ENCODE measurements at regions of chr12 and their contacts with region 1.

Region 1: DNA sequence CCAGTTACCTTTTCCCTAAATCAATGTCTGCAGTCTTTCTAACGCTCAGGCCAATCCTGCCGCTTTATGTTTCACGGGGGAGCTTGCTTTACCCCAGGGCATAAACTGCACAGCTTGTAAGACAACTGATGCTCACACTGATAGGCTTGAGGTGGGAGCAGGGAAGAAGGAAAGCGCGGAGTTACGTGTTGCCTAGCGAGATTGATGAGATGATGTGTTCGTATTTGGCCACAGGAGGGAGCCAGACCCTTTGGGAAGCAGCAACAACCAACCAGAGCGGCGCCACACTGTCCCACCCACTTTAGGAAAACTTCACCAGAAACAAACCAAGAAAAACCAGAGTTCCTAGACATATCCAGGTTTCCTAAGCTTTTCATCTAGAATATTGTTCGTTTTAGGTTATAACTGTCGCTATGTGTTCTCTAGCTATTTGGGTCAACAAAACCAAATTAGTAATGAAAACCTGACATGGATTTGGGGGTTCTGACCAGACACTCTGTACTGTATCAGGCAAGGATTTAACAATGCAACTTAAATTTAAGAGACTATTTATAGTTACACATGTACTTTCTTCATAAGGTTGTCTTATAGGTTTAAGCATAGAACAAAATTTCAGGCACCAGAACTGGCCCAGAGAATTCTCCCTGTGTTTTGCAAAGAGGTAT is 2.4 kb downstream of the IL26 start:
- DNase-seq: peak; percentile 76 to 87
- ATAC-seq: peak; percentile 99 to 100
- H3K4me3 ChIP-seq: no peak overlapping the region
- H3K27ac ChIP-seq: no peak overlapping the region
- H3K4me1 ChIP-seq: no peaks in the 10 kb centered on the region
- CTCF ChIP-seq: peak; percentile 91
- EP300 ChIP-seq: no peak
- POLR2A ChIP-seq: no peak
- RAD21 ChIP-seq: peak; percentile 92 to 96

Region 2: DNA sequence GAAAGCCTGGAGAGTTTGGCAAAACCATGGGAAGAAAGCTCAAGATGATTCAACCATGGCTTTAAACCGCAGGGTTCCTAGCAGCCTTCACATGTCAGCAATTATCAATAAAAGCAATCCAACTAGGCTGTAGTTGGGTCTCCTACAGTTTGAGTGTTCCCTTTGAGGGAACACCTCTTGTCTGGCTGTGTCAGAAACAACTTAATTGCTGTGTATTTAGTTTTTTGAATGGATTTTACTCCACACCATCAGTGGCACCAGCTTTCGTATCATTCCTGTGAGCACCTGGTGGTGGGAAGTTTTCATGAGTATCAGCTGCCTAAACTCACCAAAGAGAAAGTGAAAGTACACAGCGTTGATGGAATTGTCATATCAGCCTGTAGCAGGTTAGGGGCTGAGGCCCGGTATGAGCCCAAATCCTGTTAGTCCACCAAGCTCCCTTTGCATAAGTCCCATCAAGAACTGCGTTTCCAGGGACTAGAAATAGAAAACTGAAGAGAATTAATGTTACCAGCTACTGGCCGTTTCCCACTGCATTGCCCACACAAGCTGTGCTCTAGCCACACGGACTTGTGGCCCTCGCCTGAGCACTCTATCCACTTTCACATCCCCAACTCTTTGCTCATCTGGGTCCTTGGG is 13.3 kb after region 1 on chr12:
- CTCF ChIA-PET with region 1: interaction called, 34 read pairs
- POLR2A ChIA-PET with region 1: no interaction called
- DNase-seq: peak in 1 of 2 experiments; percentile 28
- ATAC-seq: peak; percentile 45 to 76; a peak in 5 of 6 replicates
- H3K4me3 ChIP-seq: peak overlapping the region; percentile 39
- H3K27ac ChIP-seq: peak overlapping the region; percentile 15 to 58; a peak in 3 of 6 replicates
- H3K4me1 ChIP-seq: peaks cover 15% of the 10 kb centered on the region; the same call in 2 of the 3 replicates
- CTCF ChIP-seq: no peak; the same call in 2 of the 3 replicates
- EP300 ChIP-seq: no peak
- POLR2A ChIP-seq: no peak
- RAD21 ChIP-seq: no peak

Region 3: DNA sequence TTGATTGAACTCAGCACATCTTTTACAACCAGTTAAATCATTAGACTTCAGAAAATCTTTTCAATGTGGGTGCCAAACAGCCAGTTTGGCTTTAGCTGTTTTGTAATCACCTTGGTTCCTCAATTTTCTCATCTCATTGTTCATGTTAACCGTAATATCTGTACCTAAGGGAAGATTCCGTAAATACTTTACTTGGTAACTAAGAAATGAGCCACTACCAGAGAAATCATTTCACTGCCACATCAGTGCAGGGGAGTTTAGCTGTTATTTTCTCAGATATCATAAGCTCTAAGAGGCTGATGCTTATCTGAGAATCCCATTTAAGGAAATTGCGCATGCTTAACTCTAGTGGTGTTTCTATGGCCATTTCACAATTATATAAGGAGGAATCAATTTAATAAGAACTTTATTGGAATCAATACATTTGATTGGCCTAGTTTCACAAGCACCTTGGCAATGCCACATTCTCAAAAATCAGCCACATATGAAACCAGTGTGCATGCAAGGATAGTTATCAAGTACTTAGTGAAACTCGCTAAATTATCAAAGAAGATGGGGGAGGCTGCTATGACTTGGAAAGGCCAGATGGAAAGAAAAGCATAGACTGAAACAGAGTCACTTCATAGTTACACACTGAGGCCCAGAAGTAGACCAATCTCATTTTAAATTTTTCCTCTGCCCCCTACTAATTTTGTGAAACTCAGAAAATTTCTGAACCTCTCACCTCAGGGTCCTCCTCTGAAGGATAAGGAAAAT is 58.3 kb after region 1 on chr12:
- CTCF ChIA-PET with region 1: interaction called, 11 read pairs
- POLR2A ChIA-PET with region 1: no interaction called
- DNase-seq: no peak
- ATAC-seq: no peak
- H3K4me3 ChIP-seq: no peak overlapping the region
- H3K27ac ChIP-seq: no peak overlapping the region
- H3K4me1 ChIP-seq: no peaks in the 10 kb centered on the region
- CTCF ChIP-seq: no peak
- EP300 ChIP-seq: no peak
- POLR2A ChIP-seq: no peak
- RAD21 ChIP-seq: no peak

Region 4: DNA sequence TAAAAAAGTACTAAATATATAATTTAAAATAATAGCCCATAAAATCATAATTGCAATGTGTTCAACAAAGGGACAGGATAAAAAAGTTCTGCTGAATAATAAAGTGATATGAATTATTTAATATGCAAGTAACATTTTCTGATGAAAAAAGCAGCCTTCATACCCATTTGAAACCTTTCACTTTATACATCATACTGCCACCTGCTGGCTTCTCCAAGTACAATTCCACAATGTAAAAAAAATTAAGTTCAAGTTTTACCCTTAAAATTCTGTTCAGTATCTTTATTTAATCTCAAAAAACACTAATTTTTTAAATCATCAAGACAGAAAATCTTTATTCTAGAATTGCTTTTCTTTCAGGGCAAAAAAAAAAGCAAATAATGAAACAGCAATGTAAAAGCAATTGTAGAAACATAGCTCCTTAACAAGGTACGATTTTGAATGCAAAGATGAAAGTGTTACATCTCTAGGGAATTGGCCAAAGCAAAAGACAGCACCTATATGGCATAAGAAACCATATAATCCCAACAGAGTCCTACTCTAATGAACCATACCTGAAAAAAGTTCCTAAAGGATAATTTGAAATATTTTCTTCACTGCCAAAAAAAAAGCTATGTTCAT is 93.9 kb after region 1 on chr12:
- CTCF ChIA-PET with region 1: interaction called, 61 read pairs
- POLR2A ChIA-PET with region 1: no interaction called
- DNase-seq: peak; percentile 31 to 56
- ATAC-seq: 0 out of 6 replicates have a peak, but pooled peaks of 1 of the 2 experiments have one; percentile 40
- H3K4me3 ChIP-seq: no peak overlapping the region
- H3K27ac ChIP-seq: no peak overlapping the region
- H3K4me1 ChIP-seq: no peaks in the 10 kb centered on the region
- CTCF ChIP-seq: peak; percentile 82
- EP300 ChIP-seq: no peak
- POLR2A ChIP-seq: no peak
- RAD21 ChIP-seq: peak; percentile 58 to 66

Region 5: DNA sequence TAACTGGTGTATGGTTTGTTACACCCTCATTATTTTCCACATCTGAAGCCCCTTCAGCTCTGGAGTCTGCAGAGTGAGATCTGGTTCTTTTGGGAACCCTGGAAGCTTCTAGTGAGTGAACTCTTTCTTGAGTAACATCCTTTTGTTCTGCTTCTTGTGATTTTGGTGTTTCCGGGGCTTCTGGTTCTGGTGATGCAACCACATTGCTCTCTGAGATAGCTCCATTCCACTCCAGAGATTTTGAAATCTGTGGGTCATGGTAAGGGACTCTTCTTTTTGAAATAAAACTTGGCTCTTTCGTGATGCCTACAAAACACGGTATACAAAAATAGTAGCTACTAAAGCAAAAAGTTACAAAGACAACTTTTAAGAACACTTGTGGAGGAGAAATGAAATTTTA is 103.5 kb after region 1 on chr12:
- CTCF ChIA-PET with region 1: interaction called, 19 read pairs
- POLR2A ChIA-PET with region 1: no interaction called
- DNase-seq: no peak
- ATAC-seq: no peak
- H3K4me3 ChIP-seq: no peak overlapping the region
- H3K27ac ChIP-seq: no peak overlapping the region
- H3K4me1 ChIP-seq: peaks cover 6% of the 10 kb centered on the region
- CTCF ChIP-seq: no peak
- EP300 ChIP-seq: no peak
- POLR2A ChIP-seq: no peak
- RAD21 ChIP-seq: no peak

Region 6: GRCh38 chr12:68393417-68393816 is 170.2 kb after region 1 on chr12:
- CTCF ChIA-PET with region 1: no interaction called
- POLR2A ChIA-PET with region 1: no interaction called
- DNase-seq: no peak
- ATAC-seq: no peak
- H3K4me3 ChIP-seq: no peak overlapping the region
- H3K27ac ChIP-seq: no peak overlapping the region
- H3K4me1 ChIP-seq: no peaks in the 10 kb centered on the region
- CTCF ChIP-seq: no peak
- EP300 ChIP-seq: no peak
- POLR2A ChIP-seq: no peak
- RAD21 ChIP-seq: no peak